Esophagus muscularis mucosa (tissue), 4 donors: ENCODE measurements at regions of chr3 and their contacts with region 1.

Region 1: GRCh38 chr3:5026331-5027218 is 47.3 kb downstream of the BHLHE40 start:
- DNase-seq: peak; percentile 95
- H3K4me3 ChIP-seq: peak overlapping the region; percentile 54 to 69 (median 64)
- H3K27ac ChIP-seq: peak overlapping the region; percentile 83 to 85 (median 84)
- H3K4me1 ChIP-seq: peaks cover 8 to 16% (median 12%) of the 10 kb centered on the region in 4 donors
- H3K27me3 ChIP-seq: no peaks in the 10 kb centered on the region
- CTCF ChIP-seq: peak; percentile 77 to 83 (median 78)
- EP300 ChIP-seq: peak; percentile 3
- POLR2A ChIP-seq: no peak

Region 2: GRCh38 chr3:4394048-4394447 is 632.5 kb before region 1 on chr3:
- intact Hi-C with region 1: no loop called
- DNase-seq: peak; percentile 57
- H3K4me3 ChIP-seq: no peak overlapping the region
- H3K27ac ChIP-seq: no peak overlapping the region
- H3K4me1 ChIP-seq: no peaks in the 10 kb centered on the region
- H3K27me3 ChIP-seq: no peaks in the 10 kb centered on the region
- CTCF ChIP-seq: no peak
- EP300 ChIP-seq: no peak
- POLR2A ChIP-seq: no peak

Region 3: GRCh38 chr3:4711689-4711992 is 314.9 kb before region 1 on chr3:
- intact Hi-C with region 1: loop called (anchors 2 kb)
- DNase-seq: no peak
- H3K4me3 ChIP-seq: no peak overlapping the region
- H3K27ac ChIP-seq: peak overlapping the region; percentile 11 to 82 (median 58)
- H3K4me1 ChIP-seq: peaks cover 4 to 32% (median 16%) of the 10 kb centered on the region in 4 donors
- H3K27me3 ChIP-seq: no peaks in the 10 kb centered on the region
- CTCF ChIP-seq: no peak
- EP300 ChIP-seq: no peak
- POLR2A ChIP-seq: no peak

Region 4: GRCh38 chr3:4722103-4722502 is 304.5 kb before region 1 on chr3:
- intact Hi-C with region 1: loop called (anchors 2 kb)
- DNase-seq: no peak
- H3K4me3 ChIP-seq: no peak overlapping the region
- H3K27ac ChIP-seq: peak overlapping the region; percentile 74 to 82 (median 78)
- H3K4me1 ChIP-seq: peaks cover 44 to 73% (median 66%) of the 10 kb centered on the region in 4 donors
- H3K27me3 ChIP-seq: no peaks in the 10 kb centered on the region
- CTCF ChIP-seq: peak; percentile 43 to 47 (median 44)
- EP300 ChIP-seq: no peak
- POLR2A ChIP-seq: no peak

Region 5: GRCh38 chr3:4826237-4827100 is 200.1 kb before region 1 on chr3:
- intact Hi-C with region 1: loop called (anchors 5 kb)
- DNase-seq: no peak
- H3K4me3 ChIP-seq: no peak overlapping the region
- H3K27ac ChIP-seq: peak overlapping the region; percentile 74 to 82 (median 80)
- H3K4me1 ChIP-seq: peaks cover 56 to 71% (median 69%) of the 10 kb centered on the region in 4 donors
- H3K27me3 ChIP-seq: no peaks in the 10 kb centered on the region
- CTCF ChIP-seq: no peak
- EP300 ChIP-seq: no peak
- POLR2A ChIP-seq: peak; percentile 9

Region 6: DNA sequence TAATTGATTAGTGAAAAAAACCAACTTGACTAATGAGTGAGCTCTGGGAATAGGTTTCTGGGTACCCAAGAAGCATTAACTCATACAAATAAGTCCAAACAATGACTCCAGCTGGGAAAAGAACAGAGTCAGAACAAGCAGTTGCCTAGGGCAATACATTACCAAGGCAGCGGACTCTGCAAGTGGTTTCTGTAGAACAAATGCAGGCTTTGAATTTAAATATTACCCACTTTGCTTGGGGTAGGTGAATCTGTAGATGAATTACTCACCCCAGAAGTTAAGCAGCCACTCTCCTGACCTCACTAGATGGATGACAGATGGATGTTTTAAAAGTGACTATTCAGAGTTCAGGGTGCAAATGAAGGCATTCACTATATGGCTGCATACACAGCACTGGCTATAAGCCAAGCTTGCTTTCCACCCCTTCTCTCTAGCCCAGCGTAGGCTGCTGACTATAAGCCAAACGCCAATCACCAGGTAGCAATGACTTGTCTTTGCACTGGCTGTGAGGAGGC is 120.4 kb before region 1 on chr3:
- intact Hi-C with region 1: loop called (anchors 10 kb)
- DNase-seq: no peak
- H3K4me3 ChIP-seq: no peak overlapping the region
- H3K27ac ChIP-seq: no peak overlapping the region
- H3K4me1 ChIP-seq: peaks cover 0 to 30% (median 28%) of the 10 kb centered on the region in 4 donors
- H3K27me3 ChIP-seq: no peaks in the 10 kb centered on the region
- CTCF ChIP-seq: no peak
- EP300 ChIP-seq: no peak
- POLR2A ChIP-seq: no peak

Region 7: GRCh38 chr3:4986782-4987537 is 39.6 kb before region 1 on chr3:
- intact Hi-C with region 1: loop called (anchors 5 kb)
- DNase-seq: peak; percentile 99
- H3K4me3 ChIP-seq: peak overlapping the region; percentile 49 to 59 (median 54)
- H3K27ac ChIP-seq: peak overlapping the region; percentile 95 to 99 (median 97)
- H3K4me1 ChIP-seq: peaks cover 65 to 75% (median 74%) of the 10 kb centered on the region in 4 donors
- H3K27me3 ChIP-seq: no peaks in the 10 kb centered on the region
- CTCF ChIP-seq: no peak
- EP300 ChIP-seq: peak; percentile 98
- POLR2A ChIP-seq: no peak